CD8-positive, alpha-beta T cell (primary cell): ENCODE measurements at regions of chr3 and their contacts with region 1.

Region 1: GRCh38 chr3:52220380-52221026 is 4.9 kb downstream of the TLR9 start:
- DNase-seq: peak; percentile 75 to 96 (median 86)
- ATAC-seq: peak; percentile 58
- H3K4me3 ChIP-seq: no peak overlapping the region
- H3K4me3 Mint-ChIP-seq: peak overlapping the region; percentile 65
- H3K27ac ChIP-seq: no peak overlapping the region
- H3K27ac Mint-ChIP-seq: peak overlapping the region; percentile 70
- H3K4me1 ChIP-seq: peaks cover 92% of the 10 kb centered on the region
- H3K4me1 Mint-ChIP-seq: peaks cover 85% of the 10 kb centered on the region
- H3K27me3 ChIP-seq: no peaks in the 10 kb centered on the region
- H3K27me3 Mint-ChIP-seq: no peaks in the 10 kb centered on the region
- CTCF ChIP-seq: peak; percentile 70

Region 2: GRCh38 chr3:52197842-52198668 is 22.4 kb before region 1 on chr3 and contains the start of gene ALAS1:
- CTCF ChIA-PET with region 1: interaction called, 21 read pairs
- POLR2A ChIA-PET with region 1: interaction called, 3 read pairs
- intact Hi-C with region 1: loop called in 1 of 2 experiments (anchors 2 kb)
- DNase-seq: peak; percentile 86 to 98 (median 95)
- ATAC-seq: peak; percentile 98
- H3K4me3 ChIP-seq: peak within 1 kb of the TSS; percentile 88 to 93
- H3K4me3 Mint-ChIP-seq: peak within 1 kb of the TSS; percentile 96
- H3K27ac ChIP-seq: peak within 1 kb of the TSS; percentile 69 to 86
- H3K27ac Mint-ChIP-seq: peak within 1 kb of the TSS; percentile 94
- H3K4me1 ChIP-seq: peaks cover 32% of the 10 kb centered on the region
- H3K4me1 Mint-ChIP-seq: peaks cover 41% of the 10 kb centered on the region
- H3K27me3 ChIP-seq: no peaks in the 10 kb centered on the region
- H3K27me3 Mint-ChIP-seq: no peaks in the 10 kb centered on the region
- CTCF ChIP-seq: no peak
- total RNA-seq, gene ALAS1: 6.0 to 6.6 TPM

Region 3: GRCh38 chr3:52231502-52232293 is 11.2 kb after region 1 on chr3:
- CTCF ChIA-PET with region 1: interaction called, 86 read pairs
- POLR2A ChIA-PET with region 1: interaction called, 29 read pairs
- intact Hi-C with region 1: no loop called
- DNase-seq: peak; percentile 79 to 97 (median 89)
- ATAC-seq: peak; percentile 87
- H3K4me3 ChIP-seq: no peak overlapping the region
- H3K4me3 Mint-ChIP-seq: peak overlapping the region; percentile 42
- H3K27ac ChIP-seq: peak overlapping the region in 1 of 2 experiments; percentile 17
- H3K27ac Mint-ChIP-seq: peak overlapping the region; percentile 90
- H3K4me1 ChIP-seq: peaks cover 61% of the 10 kb centered on the region
- H3K4me1 Mint-ChIP-seq: peaks cover 64% of the 10 kb centered on the region
- H3K27me3 ChIP-seq: no peaks in the 10 kb centered on the region
- H3K27me3 Mint-ChIP-seq: no peaks in the 10 kb centered on the region
- CTCF ChIP-seq: peak; percentile 92

Region 4: DNA sequence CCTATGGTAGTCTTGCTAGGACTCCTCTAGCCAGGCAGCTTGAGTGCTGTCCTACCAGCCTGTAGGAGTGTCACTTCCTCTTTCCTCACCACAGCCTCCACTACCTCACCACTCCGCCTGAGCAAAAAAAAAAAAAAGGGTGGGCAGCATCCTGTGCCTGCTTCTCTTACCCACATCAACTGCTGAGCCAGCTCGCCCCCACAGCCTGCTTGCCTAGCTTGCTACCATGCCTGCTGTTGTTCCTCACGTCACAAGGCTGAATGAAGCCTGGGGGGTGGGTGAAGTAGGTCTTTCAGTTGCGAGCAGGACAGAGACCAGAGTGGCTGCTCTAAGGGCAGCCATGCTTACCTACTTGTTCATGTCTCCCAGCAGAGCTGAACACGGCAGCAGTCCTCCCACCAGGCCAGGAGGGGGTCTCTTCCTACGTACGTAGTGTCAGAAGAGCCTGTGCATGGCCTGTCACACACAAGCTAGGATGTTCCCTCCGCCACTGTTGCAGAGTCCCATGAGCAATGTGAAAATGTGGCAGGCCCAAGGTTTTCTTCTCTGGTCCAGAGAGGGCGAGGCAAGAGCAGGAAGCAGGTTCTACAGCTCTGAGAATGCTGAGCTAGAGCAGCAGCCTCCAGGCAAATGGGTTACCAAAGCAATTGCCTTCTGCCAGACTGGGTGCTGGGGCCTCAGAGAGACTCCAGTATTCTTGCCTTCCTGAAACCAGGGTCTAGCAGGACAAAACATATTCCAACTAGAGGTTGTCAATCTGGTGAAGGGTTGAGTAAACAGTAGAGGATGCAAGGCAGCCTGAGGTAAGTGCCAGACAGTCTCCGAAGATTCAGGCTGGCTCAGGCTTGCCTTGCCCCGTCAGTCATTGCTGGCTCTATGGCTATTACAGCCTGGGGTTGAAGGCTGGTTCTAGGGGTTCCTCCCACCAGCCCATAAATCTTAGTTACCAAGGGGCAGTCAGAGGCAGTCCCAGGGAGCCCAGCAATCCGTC is 33.1 kb after region 1 on chr3:
- CTCF ChIA-PET with region 1: interaction called, 28 read pairs
- POLR2A ChIA-PET with region 1: interaction called, 7 read pairs
- intact Hi-C with region 1: no loop called
- DNase-seq: peak; percentile 70 to 97 (median 87)
- ATAC-seq: peak; percentile 86
- H3K4me3 ChIP-seq: peak overlapping the region; percentile 25 to 32
- H3K4me3 Mint-ChIP-seq: peak overlapping the region; percentile 84
- H3K27ac ChIP-seq: peak overlapping the region; percentile 76 to 92
- H3K27ac Mint-ChIP-seq: peak overlapping the region; percentile 100
- H3K4me1 ChIP-seq: peaks cover 96% of the 10 kb centered on the region
- H3K4me1 Mint-ChIP-seq: peaks cover 93% of the 10 kb centered on the region
- H3K27me3 ChIP-seq: no peaks in the 10 kb centered on the region
- H3K27me3 Mint-ChIP-seq: no peaks in the 10 kb centered on the region
- CTCF ChIP-seq: no peak

Region 5: DNA sequence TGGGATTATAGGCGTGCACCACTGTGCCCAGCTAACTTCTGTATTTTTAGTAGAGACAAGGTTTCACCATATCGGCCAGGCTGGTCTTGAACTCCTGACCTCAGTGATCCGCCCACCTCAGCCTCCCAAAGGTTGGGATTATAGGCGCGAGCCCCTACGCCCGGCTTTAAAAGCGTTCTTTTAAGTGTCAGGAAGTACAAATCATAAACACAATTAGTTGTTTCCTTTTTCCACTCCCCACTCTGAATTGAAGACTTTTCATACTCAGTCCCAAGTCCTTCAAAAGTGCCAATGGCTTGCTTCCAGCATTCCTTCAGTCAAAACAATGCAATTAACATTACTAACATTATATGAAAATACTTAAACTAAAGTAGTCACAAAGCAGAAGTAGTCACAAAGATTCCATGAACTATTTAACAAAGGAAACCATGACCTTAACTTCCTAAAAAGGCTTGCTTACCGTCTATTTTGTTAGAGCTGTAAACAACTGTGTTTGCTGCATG is 49.8 kb after region 1 on chr3:
- CTCF ChIA-PET with region 1: interaction called, 17 read pairs
- POLR2A ChIA-PET with region 1: interaction called, 3 read pairs
- intact Hi-C with region 1: no loop called
- DNase-seq: no peak
- ATAC-seq: no peak
- H3K4me3 ChIP-seq: peak overlapping the region in 1 of 2 experiments; percentile 10
- H3K4me3 Mint-ChIP-seq: peak overlapping the region; percentile 82
- H3K27ac ChIP-seq: peak overlapping the region; percentile 34 to 68
- H3K27ac Mint-ChIP-seq: peak overlapping the region; percentile 95
- H3K4me1 ChIP-seq: peaks cover 73% of the 10 kb centered on the region
- H3K4me1 Mint-ChIP-seq: peaks cover 86% of the 10 kb centered on the region
- H3K27me3 ChIP-seq: no peaks in the 10 kb centered on the region
- H3K27me3 Mint-ChIP-seq: no peaks in the 10 kb centered on the region
- CTCF ChIP-seq: no peak

Region 6: GRCh38 chr3:52291508-52292181 is 71.1 kb after region 1 on chr3:
- CTCF ChIA-PET with region 1: interaction called, 42 read pairs
- POLR2A ChIA-PET with region 1: interaction called, 16 read pairs
- intact Hi-C with region 1: no loop called
- DNase-seq: peak in 7 of 9 experiments; percentile 33 to 70 (median 60)
- ATAC-seq: peak; percentile 32
- H3K4me3 ChIP-seq: no peak overlapping the region
- H3K4me3 Mint-ChIP-seq: peak overlapping the region; percentile 37
- H3K27ac ChIP-seq: no peak overlapping the region
- H3K27ac Mint-ChIP-seq: no peak overlapping the region
- H3K4me1 ChIP-seq: peaks cover 33% of the 10 kb centered on the region
- H3K4me1 Mint-ChIP-seq: peaks cover 37% of the 10 kb centered on the region
- H3K27me3 ChIP-seq: no peaks in the 10 kb centered on the region
- H3K27me3 Mint-ChIP-seq: no peaks in the 10 kb centered on the region
- CTCF ChIP-seq: peak; percentile 49

Region 7: DNA sequence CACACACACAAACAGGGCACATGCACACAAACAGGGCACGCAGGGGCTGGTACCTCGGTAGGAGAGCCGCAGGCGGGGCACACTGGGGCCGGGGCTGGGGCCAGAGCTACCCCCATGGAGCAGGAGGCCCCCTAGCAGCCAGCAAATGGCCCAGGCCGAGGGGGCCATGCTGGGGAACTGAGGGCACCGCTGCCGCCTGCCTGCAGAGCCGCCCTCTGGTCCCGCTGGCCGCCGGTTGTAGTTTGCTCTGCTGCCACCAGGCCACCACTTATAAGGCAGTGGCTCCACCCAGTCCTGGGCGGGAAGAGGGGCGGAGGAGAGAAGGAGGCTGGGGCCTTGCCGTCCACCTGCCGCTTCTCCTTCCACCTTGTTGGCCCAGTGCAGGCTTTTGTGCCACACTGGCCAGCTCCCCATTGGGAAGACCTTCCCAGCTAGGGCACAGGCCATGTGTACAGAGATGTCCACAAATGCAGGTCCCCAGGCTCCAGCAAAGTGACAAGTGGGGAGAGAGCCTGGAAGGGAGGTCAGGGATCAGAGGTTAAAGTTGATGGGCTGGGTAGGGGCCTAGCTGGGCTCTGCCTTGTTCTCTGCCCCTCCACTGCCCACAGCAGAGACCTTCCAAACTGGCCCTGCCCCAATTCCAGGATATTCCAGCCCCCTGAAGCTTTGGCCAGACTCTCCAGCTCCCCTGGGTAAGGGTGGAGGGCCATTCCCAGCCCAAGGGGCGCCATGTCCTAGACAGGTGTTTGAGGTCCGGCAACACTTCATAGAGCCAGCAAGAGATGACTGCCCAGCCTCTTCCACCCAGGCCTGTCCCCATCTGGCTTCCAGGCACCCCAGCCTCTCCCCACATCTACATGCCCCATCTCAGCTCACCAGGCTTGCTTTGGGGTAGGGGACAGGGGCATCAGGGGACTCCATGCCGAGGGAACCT is 224.6 kb after region 1 on chr3 and contains the start of gene SEMA3G:
- CTCF ChIA-PET with region 1: interaction called, 9 read pairs
- POLR2A ChIA-PET with region 1: no interaction called
- intact Hi-C with region 1: loop called (anchors 1 to 2 kb)
- DNase-seq: peak; percentile 46 to 80 (median 71)
- ATAC-seq: peak; percentile 95
- H3K4me3 ChIP-seq: no peak within 1 kb of the TSS
- H3K4me3 Mint-ChIP-seq: no peak within 1 kb of the TSS
- H3K27ac ChIP-seq: no peak within 1 kb of the TSS
- H3K27ac Mint-ChIP-seq: no peak within 1 kb of the TSS
- H3K4me1 ChIP-seq: peaks cover 16% of the 10 kb centered on the region
- H3K4me1 Mint-ChIP-seq: peaks cover 7% of the 10 kb centered on the region
- H3K27me3 ChIP-seq: no peaks in the 10 kb centered on the region
- H3K27me3 Mint-ChIP-seq: no peaks in the 10 kb centered on the region
- CTCF ChIP-seq: peak; percentile 51
- total RNA-seq, gene SEMA3G: 0.05 TPM in 1 of 2 experiments, not detected in the other

Region 8: DNA sequence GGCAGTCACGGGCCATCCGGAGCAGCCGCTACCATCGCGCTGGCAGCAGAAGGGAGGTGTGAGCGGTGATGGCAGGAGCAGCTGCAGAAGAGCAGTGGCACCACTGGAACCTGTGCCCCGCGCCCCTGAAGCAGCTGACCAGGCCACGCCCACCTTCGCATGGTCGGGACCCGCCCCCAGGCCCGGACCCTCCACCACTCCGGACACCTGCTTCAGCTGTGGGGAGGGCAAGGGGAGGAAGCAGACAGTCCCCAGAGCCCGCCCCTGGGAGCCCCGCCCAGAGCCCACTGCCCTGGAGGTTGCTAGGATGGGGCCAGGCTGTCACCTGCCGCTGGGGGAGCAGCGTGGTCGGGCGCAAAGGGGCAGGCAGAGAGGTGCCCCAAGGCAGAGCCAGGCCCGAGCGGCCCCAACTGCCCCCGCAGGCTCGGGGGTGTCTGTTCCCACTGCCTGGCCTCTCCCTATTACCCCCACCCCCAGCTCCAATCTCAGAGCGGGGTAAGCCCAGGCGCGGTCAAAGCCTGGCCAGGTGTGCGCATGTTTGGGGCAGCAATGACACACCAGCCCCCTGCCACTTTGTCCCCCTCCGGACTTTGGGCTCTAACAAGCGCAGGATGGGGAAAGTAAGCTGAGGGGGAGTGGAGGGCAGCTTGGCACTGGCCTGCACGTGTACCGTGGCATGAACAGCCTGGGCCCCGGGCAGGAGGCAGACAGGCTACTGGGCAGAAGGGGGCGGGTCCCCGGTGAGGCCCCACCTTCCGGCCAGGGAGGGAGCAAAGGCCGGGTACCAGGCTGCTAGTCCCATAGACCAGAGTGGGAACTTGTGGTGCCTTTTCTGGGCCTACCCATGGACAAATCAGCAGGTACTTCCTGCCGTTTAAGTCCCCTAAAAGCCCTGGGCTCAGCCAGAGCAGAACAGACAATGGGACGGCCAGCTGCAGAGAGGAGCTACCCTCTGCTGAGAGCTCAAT is 494.1 kb after region 1 on chr3:
- CTCF ChIA-PET with region 1: no interaction called
- POLR2A ChIA-PET with region 1: no interaction called
- intact Hi-C with region 1: no loop called
- DNase-seq: no peak
- ATAC-seq: no peak
- H3K4me3 ChIP-seq: no peak overlapping the region
- H3K4me3 Mint-ChIP-seq: no peak overlapping the region
- H3K27ac ChIP-seq: no peak overlapping the region
- H3K27ac Mint-ChIP-seq: no peak overlapping the region
- H3K4me1 ChIP-seq: no peaks in the 10 kb centered on the region
- H3K4me1 Mint-ChIP-seq: peaks cover under 1% of the 10 kb centered on the region
- H3K27me3 ChIP-seq: no peaks in the 10 kb centered on the region
- H3K27me3 Mint-ChIP-seq: no peaks in the 10 kb centered on the region
- CTCF ChIP-seq: no peak